Panc1 (cell line): ENCODE measurements at regions of chr19 and their contacts with region 1.

Region 1: DNA sequence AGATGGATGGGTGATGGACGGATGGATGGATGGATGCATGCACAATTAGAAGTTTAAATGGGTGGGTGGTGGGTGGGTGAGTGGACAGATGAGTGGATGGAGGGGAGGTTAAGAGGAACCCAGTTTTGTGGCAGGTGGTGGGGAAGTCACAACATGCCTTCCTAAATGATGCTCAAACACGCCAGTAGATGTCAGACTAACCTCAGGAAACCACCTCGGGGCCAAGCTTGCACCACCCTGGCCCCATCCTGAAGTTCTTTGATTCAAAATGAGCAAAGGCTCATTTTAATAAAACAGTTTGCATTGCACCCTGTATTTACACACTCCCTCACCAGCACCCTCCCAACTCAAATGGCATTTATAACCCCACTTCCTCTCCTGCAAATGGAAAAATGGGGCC is 91.4 kb upstream of the CACNA1A start:
- DNase-seq: peak; percentile 27
- ATAC-seq: peak; percentile 91
- H3K4me3 ChIP-seq: no peak overlapping the region
- H3K27ac ChIP-seq: no peak overlapping the region
- H3K4me1 ChIP-seq: no peaks in the 10 kb centered on the region
- H3K27me3 ChIP-seq: no peaks in the 10 kb centered on the region
- CTCF ChIP-seq: peak; percentile 67; the same call in 1 of the 2 replicates

Region 2: DNA sequence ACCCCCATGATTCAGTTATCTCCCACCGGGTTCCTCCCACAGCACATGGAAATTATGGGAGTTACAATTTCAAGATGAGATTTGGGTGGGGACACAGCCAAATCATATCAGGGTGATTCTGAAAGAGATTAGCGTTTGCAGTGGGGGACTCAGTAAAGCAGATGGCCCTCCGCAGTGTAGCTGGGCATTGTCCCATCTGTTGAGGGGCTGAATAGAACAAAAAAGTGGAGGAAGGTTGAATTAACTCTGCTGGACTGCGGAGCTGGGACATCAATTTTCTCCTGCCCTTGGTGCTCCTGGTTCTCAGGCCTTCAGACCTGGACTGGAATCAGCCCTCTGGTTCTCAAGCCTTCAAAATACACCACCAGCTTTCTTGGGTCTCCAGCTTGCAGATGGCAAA is 36.2 kb before region 1 on chr19:
- CTCF ChIA-PET with region 1: no interaction called
- POLR2A ChIA-PET with region 1: no interaction called
- in situ Hi-C with region 1: no loop called
- intact Hi-C with region 1: no loop called
- DNase-seq: no peak
- ATAC-seq: no peak
- H3K4me3 ChIP-seq: no peak overlapping the region
- H3K27ac ChIP-seq: no peak overlapping the region
- H3K4me1 ChIP-seq: no peaks in the 10 kb centered on the region
- H3K27me3 ChIP-seq: no peaks in the 10 kb centered on the region
- CTCF ChIP-seq: no peak

Region 3: GRCh38 chr19:13718733-13719132 is 121.1 kb after region 1 on chr19:
- CTCF ChIA-PET with region 1: interaction called, 9 read pairs
- POLR2A ChIA-PET with region 1: no interaction called
- in situ Hi-C with region 1: no loop called
- intact Hi-C with region 1: loop called (anchors 1 kb)
- DNase-seq: no peak
- ATAC-seq: peak; percentile 89
- H3K4me3 ChIP-seq: no peak overlapping the region
- H3K27ac ChIP-seq: peak overlapping the region; percentile 67
- H3K4me1 ChIP-seq: peaks cover 9% of the 10 kb centered on the region; the same call in 1 of the 2 replicates
- H3K27me3 ChIP-seq: no peaks in the 10 kb centered on the region
- CTCF ChIP-seq: peak; percentile 73

Region 4: DNA sequence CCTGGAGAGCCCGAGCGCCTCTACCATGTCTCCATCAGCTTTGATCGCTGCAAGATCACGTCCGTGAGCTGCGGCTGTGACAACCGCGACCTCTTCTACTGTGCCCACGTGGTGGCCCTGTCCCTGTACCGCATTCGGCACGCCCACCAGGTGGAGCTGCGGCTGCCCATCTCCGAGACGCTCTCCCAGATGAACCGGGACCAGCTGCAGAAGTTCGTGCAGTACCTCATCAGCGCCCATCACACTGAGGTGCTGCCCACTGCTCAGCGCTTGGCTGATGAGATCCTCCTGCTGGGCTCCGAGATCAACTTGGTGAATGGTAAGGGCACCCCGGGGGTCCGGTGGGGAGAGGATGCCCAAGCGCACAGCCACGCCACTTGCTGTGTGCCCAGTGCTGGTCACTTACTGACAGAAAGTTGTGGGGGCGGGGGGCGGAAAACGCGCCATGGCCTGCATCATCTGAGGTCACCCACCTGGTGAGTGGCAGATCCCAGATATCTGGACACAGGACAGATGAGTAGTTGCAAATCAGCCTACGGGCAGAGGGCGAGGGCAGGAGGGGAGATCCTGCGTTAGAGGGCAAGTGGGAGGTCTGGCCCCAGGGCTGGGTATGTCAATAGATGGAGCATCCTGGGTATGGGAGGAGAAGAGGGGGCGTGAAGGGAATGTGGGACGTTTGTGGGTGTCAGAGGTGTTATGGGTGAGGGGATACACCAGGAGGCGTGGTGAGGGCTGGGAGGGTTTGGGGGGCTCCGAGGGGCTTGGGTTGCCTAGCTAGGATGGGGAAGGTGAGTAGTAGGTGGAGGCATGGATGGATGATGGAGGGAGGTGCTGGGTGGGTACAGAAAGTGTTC is 207.4 kb after region 1 on chr19:
- CTCF ChIA-PET with region 1: no interaction called
- POLR2A ChIA-PET with region 1: no interaction called
- in situ Hi-C with region 1: no loop called
- intact Hi-C with region 1: no loop called
- DNase-seq: no peak
- ATAC-seq: peak; percentile 73; the same call in 1 of the 2 replicates
- H3K4me3 ChIP-seq: no peak overlapping the region
- H3K27ac ChIP-seq: no peak overlapping the region
- H3K4me1 ChIP-seq: no peaks in the 10 kb centered on the region
- H3K27me3 ChIP-seq: no peaks in the 10 kb centered on the region
- CTCF ChIP-seq: no peak; the same call in 1 of the 2 replicates